Activated CD4-positive, alpha-beta T cell treated with anti-CD3 and anti-CD28 coated beads, Interleukin-2, amount 10 ng/mL, durations not matched to agents 7 days and 5 days (primary cell): ENCODE measurements at regions of chr10 and their contacts with region 1.

Region 1: DNA sequence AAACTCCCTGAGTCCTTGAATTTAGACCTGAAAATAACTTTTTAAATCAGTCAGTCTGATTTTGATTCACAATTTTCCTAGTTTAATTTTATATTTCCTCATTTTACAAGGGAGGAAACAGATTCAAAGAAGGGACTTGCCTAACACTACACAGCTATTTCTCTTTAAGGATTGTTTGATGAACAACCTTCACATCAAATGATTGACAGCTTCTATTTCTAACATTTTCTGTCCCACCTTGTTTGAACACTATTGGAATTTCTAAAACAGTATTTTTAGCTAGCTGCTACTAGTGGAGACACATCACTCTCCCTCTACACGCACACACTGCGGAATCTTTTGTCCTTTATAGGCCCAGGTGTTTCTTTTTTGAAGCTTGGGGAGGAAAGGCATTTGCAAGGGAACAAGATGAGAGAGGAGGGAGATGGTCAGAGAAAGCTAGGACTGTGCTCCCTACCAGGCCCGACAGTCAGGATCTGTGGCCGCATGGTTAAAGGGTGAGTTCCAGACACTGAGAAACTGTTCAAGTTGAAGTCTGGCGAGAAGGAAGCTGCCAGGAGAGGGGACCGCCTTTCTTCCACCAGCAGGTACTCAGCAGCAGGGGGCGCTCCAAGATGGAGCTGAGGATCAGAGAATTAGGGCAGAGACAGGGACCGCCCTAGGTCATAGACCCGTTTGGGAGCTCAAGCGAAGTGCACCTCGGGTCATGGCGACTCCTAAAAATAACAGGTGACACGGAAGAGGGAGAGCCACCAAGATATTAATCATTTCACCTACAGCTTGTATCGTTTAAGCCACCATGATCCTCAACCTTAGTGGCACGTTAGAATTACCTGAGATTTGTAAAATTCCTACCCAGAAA is 49.7 kb downstream of the DNAJC12 start:
- DNase-seq: peak; percentile 73
- H3K4me3 Mint-ChIP-seq: peak overlapping the region; percentile 17
- H3K27ac Mint-ChIP-seq: peak overlapping the region; percentile 39
- H3K4me1 Mint-ChIP-seq: peaks cover 46% of the 10 kb centered on the region
- H3K27me3 Mint-ChIP-seq: no peaks in the 10 kb centered on the region

Region 2: GRCh38 chr10:67666416-67667034 is 121.7 kb before region 1 on chr10:
- CTCF ChIA-PET with region 1: no interaction called
- POLR2A ChIA-PET with region 1: no interaction called
- DNase-seq: no peak
- H3K4me3 Mint-ChIP-seq: no peak overlapping the region
- H3K27ac Mint-ChIP-seq: no peak overlapping the region
- H3K4me1 Mint-ChIP-seq: no peaks in the 10 kb centered on the region
- H3K27me3 Mint-ChIP-seq: peaks cover 7% of the 10 kb centered on the region

Region 3: GRCh38 chr10:67770537-67770936 is 17.7 kb before region 1 on chr10:
- CTCF ChIA-PET with region 1: interaction called, 15 read pairs
- POLR2A ChIA-PET with region 1: no interaction called
- DNase-seq: no peak
- H3K4me3 Mint-ChIP-seq: no peak overlapping the region
- H3K27ac Mint-ChIP-seq: no peak overlapping the region
- H3K4me1 Mint-ChIP-seq: peaks cover 44% of the 10 kb centered on the region
- H3K27me3 Mint-ChIP-seq: peaks cover 2% of the 10 kb centered on the region

Region 4: DNA sequence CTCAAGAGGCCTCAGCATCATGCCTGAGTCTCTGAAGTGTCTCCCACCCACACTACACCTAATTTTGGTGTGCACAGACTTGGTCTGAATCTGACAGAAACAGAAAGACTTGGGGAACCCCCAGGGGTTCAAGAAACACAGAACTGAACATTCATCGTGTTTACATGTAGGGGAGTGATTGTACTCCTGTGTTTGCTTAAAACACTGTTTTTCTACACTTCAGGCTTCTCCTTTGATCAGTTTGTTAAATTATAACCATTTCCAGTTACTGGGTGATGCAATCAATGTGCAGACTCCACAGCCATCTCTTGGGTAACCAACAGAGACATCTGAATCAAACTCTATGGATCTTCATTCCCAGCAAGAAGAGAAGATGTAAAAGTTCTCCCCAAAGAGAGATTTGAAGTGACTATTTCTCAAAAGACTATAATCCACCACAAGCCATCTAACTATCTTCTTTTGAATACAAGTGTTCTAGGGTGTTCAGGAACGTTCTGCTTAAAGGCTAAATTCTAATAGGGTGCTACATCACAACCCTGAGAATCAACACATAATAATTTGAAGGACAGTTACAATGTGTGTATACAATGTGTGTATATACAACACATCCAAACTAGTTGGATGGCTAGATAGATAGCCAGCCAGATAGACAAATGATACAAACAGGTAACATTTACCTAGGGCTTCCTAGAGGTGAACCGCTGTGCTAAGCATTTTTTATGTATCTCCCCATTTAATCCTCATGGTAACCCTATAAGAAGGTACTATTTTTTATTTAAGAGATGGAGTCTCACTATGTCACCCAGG is 15.5 kb after region 1 on chr10:
- CTCF ChIA-PET with region 1: interaction called, 11 read pairs
- POLR2A ChIA-PET with region 1: no interaction called
- DNase-seq: no peak
- H3K4me3 Mint-ChIP-seq: no peak overlapping the region
- H3K27ac Mint-ChIP-seq: no peak overlapping the region
- H3K4me1 Mint-ChIP-seq: peaks cover 2% of the 10 kb centered on the region
- H3K27me3 Mint-ChIP-seq: no peaks in the 10 kb centered on the region

Region 5: GRCh38 chr10:67827811-67828210 is 39.6 kb after region 1 on chr10:
- CTCF ChIA-PET with region 1: no interaction called
- POLR2A ChIA-PET with region 1: no interaction called
- DNase-seq: no peak
- H3K4me3 Mint-ChIP-seq: no peak overlapping the region
- H3K27ac Mint-ChIP-seq: no peak overlapping the region
- H3K4me1 Mint-ChIP-seq: peaks cover 4% of the 10 kb centered on the region
- H3K27me3 Mint-ChIP-seq: no peaks in the 10 kb centered on the region

Region 6: DNA sequence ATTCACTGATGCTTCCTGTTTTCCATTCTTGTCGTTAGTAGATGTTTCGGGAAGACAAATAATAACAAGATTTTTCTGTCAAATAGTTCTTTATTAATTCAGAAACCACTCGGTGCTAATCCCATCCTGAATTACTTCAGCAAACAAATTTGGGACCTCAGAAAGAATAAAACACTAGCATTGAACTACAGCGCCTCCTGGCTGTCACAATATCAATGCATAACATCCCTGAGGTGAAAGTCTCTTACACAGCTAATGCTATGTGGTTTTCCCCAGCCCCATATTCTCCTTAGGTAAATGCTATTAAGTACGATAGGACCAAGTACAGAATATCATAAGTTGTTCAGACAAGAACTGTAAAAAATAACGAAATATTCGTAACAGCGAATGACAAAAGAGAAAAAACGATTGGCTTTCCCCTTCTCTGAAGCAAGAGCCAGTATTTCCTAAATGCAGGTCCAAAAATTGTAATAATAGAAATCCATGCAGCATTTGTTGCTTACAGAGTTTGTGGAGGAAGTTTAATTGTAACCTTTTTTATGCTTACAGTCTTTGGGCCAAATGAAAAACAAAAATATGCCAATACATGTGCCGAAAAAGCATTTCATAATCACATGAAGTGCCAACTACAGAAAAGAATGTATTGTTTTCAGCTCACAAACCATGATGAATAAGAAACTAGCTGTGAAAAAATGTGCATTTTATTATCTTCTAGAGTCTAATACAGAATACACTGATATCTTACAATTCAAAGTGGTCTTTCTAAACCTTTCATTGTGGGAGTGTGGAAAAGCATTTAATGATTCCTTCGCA is 368.3 kb after region 1 on chr10:
- CTCF ChIA-PET with region 1: interaction called, 12 read pairs
- POLR2A ChIA-PET with region 1: no interaction called
- DNase-seq: peak; percentile 75
- H3K4me3 Mint-ChIP-seq: no peak overlapping the region
- H3K27ac Mint-ChIP-seq: no peak overlapping the region
- H3K4me1 Mint-ChIP-seq: peaks cover 3% of the 10 kb centered on the region
- H3K27me3 Mint-ChIP-seq: no peaks in the 10 kb centered on the region